ENCODE measurements at regions of chr12 and their contacts with region 1.

Region 1: GRCh38 chr12:50187084-50187900 is 20.1 kb upstream of the CERS5 start:
- DNase-seq: no peak

Region 2: DNA sequence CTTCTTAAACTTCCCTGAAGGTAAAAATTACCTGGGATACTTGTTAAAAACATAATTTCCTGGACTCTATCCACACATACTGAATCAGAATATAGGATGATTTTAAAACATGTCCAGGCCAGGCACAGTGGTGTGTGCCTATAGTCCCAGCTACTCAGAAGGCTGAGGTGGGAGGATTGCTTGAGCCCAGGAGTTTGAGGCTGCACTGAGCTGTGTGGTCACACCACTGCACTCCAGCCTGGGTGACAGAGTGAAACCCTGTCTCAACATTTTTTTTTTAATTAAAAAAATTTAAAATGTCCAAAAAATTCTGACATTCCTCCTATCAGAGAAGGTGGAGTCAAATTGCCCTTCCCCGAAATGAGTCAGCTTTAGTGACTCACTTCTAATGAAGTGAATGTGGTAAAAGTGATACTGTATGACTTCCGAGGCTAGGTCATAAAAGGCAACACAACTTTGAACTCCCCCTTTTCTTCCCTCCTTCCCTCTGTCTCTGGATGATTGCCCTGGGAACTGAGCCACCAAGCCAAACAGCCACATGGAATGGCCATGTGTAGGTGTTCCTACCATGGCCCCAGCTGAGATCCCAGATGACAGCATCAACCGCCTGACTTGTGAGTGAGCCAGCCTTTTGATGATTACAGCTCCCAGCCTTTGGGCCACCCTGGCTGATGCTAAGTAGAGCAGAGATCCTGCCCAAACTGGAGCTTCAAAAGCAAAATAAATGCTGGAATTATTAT is 59.8 kb after region 1 on chr12:
- intact Hi-C with region 1: loop called (anchors 5 kb)
- DNase-seq: peak; percentile 88

Region 3: GRCh38 chr12:50314629-50315312 is 127.5 kb after region 1 on chr12:
- intact Hi-C with region 1: loop called (anchors 10 kb)
- DNase-seq: no peak

Region 4: GRCh38 chr12:50400598-50401364 is 213.5 kb after region 1 on chr12 and contains the start of gene LARP4:
- intact Hi-C with region 1: loop called (anchors 10 kb)
- DNase-seq: peak; percentile 95
- total RNA-seq, gene LARP4: 61.9 TPM